ENCODE measurements at regions of chr15 and their contacts with region 1.

Region 1: GRCh38 chr15:68559345-68560310 is 19.2 kb upstream of the CORO2B start:
- DNase-seq: peak; percentile 76
- H3K4me3 Mint-ChIP-seq: peak overlapping the region; percentile 60
- H3K27ac Mint-ChIP-seq: no peak overlapping the region
- H3K4me1 Mint-ChIP-seq: peaks cover 25% of the 10 kb centered on the region
- H3K27me3 Mint-ChIP-seq: peaks cover 81% of the 10 kb centered on the region

Region 2: GRCh38 chr15:68924866-68925560 is 365.4 kb after region 1 on chr15:
- CTCF ChIA-PET with region 1: interaction called, 13 read pairs
- DNase-seq: peak; percentile 77
- H3K4me3 Mint-ChIP-seq: no peak overlapping the region
- H3K27ac Mint-ChIP-seq: no peak overlapping the region
- H3K4me1 Mint-ChIP-seq: no peaks in the 10 kb centered on the region
- H3K27me3 Mint-ChIP-seq: peaks cover 26% of the 10 kb centered on the region

Measured in activated naive CD4-positive, alpha-beta T cell treated with anti-CD3 and anti-CD28 coated beads, Interleukin-2, amount 10 ng/mL, durations not matched to agents 7 days and 5 days (primary cell).